ENCODE measurements at regions of chr6 and their contacts with region 1.

Region 1: DNA sequence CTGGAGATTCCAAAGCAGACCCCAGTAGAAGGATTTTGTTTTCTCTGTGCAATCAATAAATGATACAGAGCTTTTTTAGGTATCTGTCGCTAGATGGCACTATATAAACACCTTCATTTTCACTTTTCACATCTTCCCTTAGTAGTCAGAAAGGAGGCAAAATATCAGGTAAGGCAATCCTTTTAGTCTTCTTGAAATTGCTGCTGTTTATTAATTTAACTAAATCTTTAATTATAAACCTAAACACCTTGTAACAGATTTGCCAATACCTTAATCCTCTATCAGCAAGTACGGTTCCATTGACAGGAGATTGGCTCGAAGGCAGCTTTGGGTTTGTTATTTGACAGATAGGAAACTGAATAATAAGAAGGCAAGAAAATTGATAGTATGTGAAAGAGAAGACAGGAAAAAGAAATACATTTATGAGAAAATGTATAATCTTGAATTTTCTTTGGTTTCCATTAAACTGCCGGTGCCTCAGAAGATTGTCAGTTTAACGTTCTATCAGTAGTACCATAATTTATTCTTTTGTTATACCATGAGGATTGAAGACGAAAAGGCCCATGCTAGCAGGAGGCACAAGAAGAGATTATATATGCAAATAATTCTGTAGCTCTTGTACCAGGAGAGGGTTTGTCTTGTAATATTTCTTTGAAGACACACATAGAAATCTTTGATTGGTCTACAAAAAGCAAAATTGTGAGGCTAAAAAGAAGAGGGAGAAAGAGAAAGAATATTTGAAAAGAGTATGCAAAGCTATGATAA is 23.5 kb upstream of the IBTK start:
- DNase-seq: no peak
- ATAC-seq: no peak
- H3K4me3 Mint-ChIP-seq: no peak overlapping the region
- H3K27ac Mint-ChIP-seq: no peak overlapping the region
- H3K4me1 Mint-ChIP-seq: no peaks in the 10 kb centered on the region
- H3K27me3 Mint-ChIP-seq: no peaks in the 10 kb centered on the region
- CTCF ChIP-seq: no peak

Region 2: GRCh38 chr6:82247634-82248232 is 23.3 kb before region 1 on chr6 and contains the start of gene IBTK:
- CTCF ChIA-PET with region 1: no interaction called
- POLR2A ChIA-PET with region 1: no interaction called
- intact Hi-C with region 1: loop called (anchors 2 kb)
- DNase-seq: peak; percentile 89
- ATAC-seq: peak; percentile 90
- H3K4me3 Mint-ChIP-seq: peak within 1 kb of the TSS; percentile 97
- H3K27ac Mint-ChIP-seq: peak within 1 kb of the TSS; percentile 93
- H3K4me1 Mint-ChIP-seq: peaks cover 33% of the 10 kb centered on the region
- H3K27me3 Mint-ChIP-seq: no peaks in the 10 kb centered on the region
- CTCF ChIP-seq: no peak
- total RNA-seq, gene IBTK: 25.6 and 30.1 TPM in 2 replicates

Region 3: DNA sequence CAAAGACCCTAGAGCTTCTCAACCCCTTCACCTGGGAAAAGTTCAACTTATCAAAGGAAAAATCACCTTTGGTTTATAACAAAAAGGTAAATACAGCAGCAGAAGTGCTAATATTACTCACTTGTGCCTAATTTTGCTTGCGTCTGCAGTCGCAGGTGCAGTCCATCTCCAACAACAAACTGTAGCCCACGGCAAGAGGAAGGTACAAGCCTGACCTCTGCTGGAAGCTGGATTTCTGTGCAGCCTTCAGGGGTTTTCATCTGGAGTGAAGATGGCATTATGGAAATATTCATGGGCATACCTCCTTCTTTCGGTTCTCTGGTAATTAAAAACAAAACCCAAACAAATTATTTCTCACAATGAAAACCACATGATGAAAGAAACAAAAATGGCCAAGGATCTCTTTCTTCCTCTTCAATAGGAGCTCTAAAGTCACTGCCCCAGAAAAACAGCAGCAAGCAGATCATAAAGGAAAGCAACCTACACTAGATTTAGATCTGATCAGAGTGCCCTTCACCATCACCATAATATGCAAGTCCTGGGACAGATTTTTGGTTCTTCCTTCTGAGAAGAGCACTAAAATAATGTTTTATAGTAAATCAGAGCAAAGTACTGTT is 786.8 kb after region 1 on chr6:
- CTCF ChIA-PET with region 1: interaction called, 69 read pairs
- POLR2A ChIA-PET with region 1: no interaction called
- intact Hi-C with region 1: loop called (anchors 1 kb)
- DNase-seq: no peak
- ATAC-seq: peak; percentile 67
- H3K4me3 Mint-ChIP-seq: no peak overlapping the region
- H3K27ac Mint-ChIP-seq: no peak overlapping the region
- H3K4me1 Mint-ChIP-seq: peaks cover 5% of the 10 kb centered on the region
- H3K27me3 Mint-ChIP-seq: no peaks in the 10 kb centered on the region
- CTCF ChIP-seq: no peak

Region 4: GRCh38 chr6:83183082-83183828 is 912.2 kb after region 1 on chr6:
- CTCF ChIA-PET with region 1: no interaction called
- POLR2A ChIA-PET with region 1: no interaction called
- intact Hi-C with region 1: no loop called
- DNase-seq: no peak
- ATAC-seq: no peak
- H3K4me3 Mint-ChIP-seq: no peak overlapping the region
- H3K27ac Mint-ChIP-seq: no peak overlapping the region
- H3K4me1 Mint-ChIP-seq: no peaks in the 10 kb centered on the region
- H3K27me3 Mint-ChIP-seq: no peaks in the 10 kb centered on the region
- CTCF ChIP-seq: no peak

Region 5: DNA sequence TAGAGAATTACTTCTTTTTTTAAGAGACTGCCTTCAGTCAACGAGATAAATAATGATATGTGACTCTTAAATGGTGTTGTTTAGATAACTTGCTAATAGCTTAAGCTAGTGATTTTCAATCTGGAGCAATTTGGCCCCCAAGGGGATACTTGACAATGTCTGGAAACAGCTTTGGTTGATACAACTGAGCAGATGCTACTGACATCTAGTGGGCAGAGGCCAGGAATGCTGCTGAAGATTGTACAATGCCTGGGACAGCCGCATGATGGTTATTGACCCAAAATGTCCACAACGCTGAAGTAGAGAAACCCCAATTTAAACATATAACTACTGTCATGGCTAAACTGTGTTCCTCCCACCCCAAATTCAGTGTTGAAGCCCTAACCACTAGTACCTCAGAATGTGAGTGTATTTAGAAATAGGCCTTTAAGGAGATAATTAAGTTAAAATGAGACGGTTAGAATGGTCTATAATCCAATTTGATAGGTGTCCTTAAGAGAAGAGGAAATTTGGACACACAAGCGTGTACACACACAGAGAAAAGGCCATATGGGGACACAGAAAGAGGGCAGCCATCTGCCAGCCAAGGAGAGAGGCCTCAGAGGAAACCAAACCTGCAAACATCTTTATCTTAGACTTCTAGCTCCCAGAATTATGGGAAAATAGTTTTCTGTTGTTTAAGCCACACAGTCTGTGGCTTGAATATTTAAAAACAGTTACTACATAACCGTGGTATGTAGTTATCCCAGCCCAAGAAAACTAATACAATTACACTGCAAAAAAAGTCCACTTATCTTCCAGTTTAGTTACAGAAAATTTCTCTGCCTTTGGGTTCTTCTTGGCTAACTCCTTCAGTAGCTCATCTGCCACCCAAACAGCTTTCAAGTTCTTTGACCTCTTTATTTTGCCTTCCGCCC is 944.3 kb after region 1 on chr6:
- CTCF ChIA-PET with region 1: interaction called, 14 read pairs
- POLR2A ChIA-PET with region 1: no interaction called
- intact Hi-C with region 1: loop called (anchors 1 kb)
- DNase-seq: no peak
- ATAC-seq: peak; percentile 98
- H3K4me3 Mint-ChIP-seq: no peak overlapping the region
- H3K27ac Mint-ChIP-seq: no peak overlapping the region
- H3K4me1 Mint-ChIP-seq: no peaks in the 10 kb centered on the region
- H3K27me3 Mint-ChIP-seq: peaks cover 14% of the 10 kb centered on the region
- CTCF ChIP-seq: peak; percentile 64

Region 6: GRCh38 chr6:83514866-83515466 is 1243.9 kb after region 1 on chr6:
- CTCF ChIA-PET with region 1: interaction called, 16 read pairs
- POLR2A ChIA-PET with region 1: no interaction called
- intact Hi-C with region 1: loop called (anchors 1 kb)
- DNase-seq: no peak
- ATAC-seq: no peak
- H3K4me3 Mint-ChIP-seq: no peak overlapping the region
- H3K27ac Mint-ChIP-seq: no peak overlapping the region
- H3K4me1 Mint-ChIP-seq: peaks cover 9% of the 10 kb centered on the region
- H3K27me3 Mint-ChIP-seq: peaks cover 21% of the 10 kb centered on the region
- CTCF ChIP-seq: peak; percentile 68

Measured in activated B cell treated with CpG ODN at 0.5 μM for 24 hours (primary cell).